Caco-2 (cell line): ENCODE measurements at regions of chr11 and their contacts with region 1.

Region 1: GRCh38 chr11:33257897-33258630 is 883 bp downstream of the HIPK3 start:
- DNase-seq: peak; percentile 86
- H3K4me3 ChIP-seq: peak overlapping the region; percentile 90
- H3K4me3 Mint-ChIP-seq: peak overlapping the region; percentile 96
- H3K27ac Mint-ChIP-seq: peak overlapping the region; percentile 97
- H3K4me1 ChIP-seq: peaks cover 14% of the 10 kb centered on the region
- H3K4me1 Mint-ChIP-seq: peaks cover 20% of the 10 kb centered on the region
- H3K27me3 ChIP-seq: no peaks in the 10 kb centered on the region
- H3K27me3 Mint-ChIP-seq: no peaks in the 10 kb centered on the region
- CTCF ChIP-seq: peak in 1 of 2 experiments; percentile 39

Region 2: DNA sequence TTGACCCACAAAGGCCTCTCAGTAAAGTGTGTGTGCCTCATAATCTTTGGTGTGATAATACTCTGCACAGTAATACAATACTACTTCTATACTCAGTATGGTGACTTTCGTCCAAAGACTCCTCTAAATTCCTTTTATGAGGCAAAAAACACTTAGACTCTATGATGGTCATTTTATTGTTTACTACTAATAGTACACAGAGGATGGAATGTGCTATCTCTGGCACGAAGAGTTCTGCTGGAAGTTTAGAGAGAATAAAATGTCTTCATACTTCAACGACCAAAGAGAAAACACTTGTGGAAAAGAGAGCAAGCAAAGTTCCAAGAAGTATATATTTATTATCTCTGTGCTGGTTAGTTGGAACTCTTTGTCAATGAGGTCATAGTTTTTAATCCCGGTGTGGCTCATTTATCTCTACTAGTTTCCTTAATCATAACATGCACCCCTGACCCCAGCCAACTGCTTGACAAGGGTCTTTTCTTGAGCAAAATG is 89.3 kb before region 1 on chr11:
- CTCF ChIA-PET with region 1: no interaction called
- POLR2A ChIA-PET with region 1: no interaction called
- intact Hi-C with region 1: loop called (anchors 2 kb)
- DNase-seq: no peak
- H3K4me3 ChIP-seq: no peak overlapping the region
- H3K4me3 Mint-ChIP-seq: no peak overlapping the region
- H3K27ac Mint-ChIP-seq: no peak overlapping the region
- H3K4me1 ChIP-seq: peaks cover 25% of the 10 kb centered on the region
- H3K4me1 Mint-ChIP-seq: peaks cover 19% of the 10 kb centered on the region
- H3K27me3 ChIP-seq: no peaks in the 10 kb centered on the region
- H3K27me3 Mint-ChIP-seq: no peaks in the 10 kb centered on the region
- CTCF ChIP-seq: no peak

Region 3: GRCh38 chr11:33182246-33182878 is 75.7 kb before region 1 on chr11:
- CTCF ChIA-PET with region 1: no interaction called
- POLR2A ChIA-PET with region 1: no interaction called
- intact Hi-C with region 1: loop called (anchors 1 kb)
- DNase-seq: peak; percentile 86 to 92
- H3K4me3 ChIP-seq: no peak overlapping the region
- H3K4me3 Mint-ChIP-seq: peak overlapping the region; percentile 38
- H3K27ac Mint-ChIP-seq: peak overlapping the region; percentile 94
- H3K4me1 ChIP-seq: peaks cover 59% of the 10 kb centered on the region
- H3K4me1 Mint-ChIP-seq: peaks cover 39% of the 10 kb centered on the region
- H3K27me3 ChIP-seq: no peaks in the 10 kb centered on the region
- H3K27me3 Mint-ChIP-seq: no peaks in the 10 kb centered on the region
- CTCF ChIP-seq: no peak

Region 4: DNA sequence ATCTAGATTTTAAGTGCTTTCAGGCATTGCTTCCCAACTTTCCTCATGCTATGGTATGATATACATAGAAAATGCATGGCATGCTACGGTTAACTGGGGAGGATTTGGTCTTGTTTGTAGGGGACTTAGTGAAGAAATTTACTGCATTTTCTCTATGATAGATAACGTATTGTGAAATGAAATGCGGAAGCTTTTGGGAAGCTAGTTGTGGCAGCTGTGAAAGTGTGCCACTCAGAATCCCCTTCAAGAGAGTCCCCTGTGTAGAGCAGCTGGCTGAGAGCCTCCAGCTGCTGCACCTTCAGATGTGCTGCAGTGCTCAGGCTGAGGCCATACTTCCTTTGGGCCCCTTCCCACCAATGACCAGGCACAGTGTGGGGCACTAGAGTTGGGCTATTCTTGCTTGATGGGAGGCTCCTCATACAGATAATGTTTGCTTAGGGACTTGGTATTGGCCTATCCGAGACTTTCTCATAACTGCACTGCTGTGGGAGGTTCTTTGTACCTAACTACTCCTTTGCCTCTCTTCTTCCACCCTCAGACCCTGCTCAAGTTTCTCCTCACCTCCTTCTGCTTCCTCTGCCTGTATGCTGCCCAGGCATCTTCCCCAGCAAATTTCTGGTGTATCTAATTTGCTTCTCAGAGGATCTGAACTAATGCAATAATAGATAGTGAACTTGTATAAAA is 66.4 kb after region 1 on chr11:
- CTCF ChIA-PET with region 1: no interaction called
- POLR2A ChIA-PET with region 1: no interaction called
- intact Hi-C with region 1: loop called (anchors 1 kb)
- DNase-seq: peak in 1 of 2 experiments; percentile 51
- H3K4me3 ChIP-seq: no peak overlapping the region
- H3K4me3 Mint-ChIP-seq: peak overlapping the region; percentile 20
- H3K27ac Mint-ChIP-seq: no peak overlapping the region
- H3K4me1 ChIP-seq: peaks cover 35% of the 10 kb centered on the region
- H3K4me1 Mint-ChIP-seq: peaks cover 14% of the 10 kb centered on the region
- H3K27me3 ChIP-seq: no peaks in the 10 kb centered on the region
- H3K27me3 Mint-ChIP-seq: no peaks in the 10 kb centered on the region
- CTCF ChIP-seq: no peak